ENCODE measurements at regions of chr9 and their contacts with region 1.

Region 1: DNA sequence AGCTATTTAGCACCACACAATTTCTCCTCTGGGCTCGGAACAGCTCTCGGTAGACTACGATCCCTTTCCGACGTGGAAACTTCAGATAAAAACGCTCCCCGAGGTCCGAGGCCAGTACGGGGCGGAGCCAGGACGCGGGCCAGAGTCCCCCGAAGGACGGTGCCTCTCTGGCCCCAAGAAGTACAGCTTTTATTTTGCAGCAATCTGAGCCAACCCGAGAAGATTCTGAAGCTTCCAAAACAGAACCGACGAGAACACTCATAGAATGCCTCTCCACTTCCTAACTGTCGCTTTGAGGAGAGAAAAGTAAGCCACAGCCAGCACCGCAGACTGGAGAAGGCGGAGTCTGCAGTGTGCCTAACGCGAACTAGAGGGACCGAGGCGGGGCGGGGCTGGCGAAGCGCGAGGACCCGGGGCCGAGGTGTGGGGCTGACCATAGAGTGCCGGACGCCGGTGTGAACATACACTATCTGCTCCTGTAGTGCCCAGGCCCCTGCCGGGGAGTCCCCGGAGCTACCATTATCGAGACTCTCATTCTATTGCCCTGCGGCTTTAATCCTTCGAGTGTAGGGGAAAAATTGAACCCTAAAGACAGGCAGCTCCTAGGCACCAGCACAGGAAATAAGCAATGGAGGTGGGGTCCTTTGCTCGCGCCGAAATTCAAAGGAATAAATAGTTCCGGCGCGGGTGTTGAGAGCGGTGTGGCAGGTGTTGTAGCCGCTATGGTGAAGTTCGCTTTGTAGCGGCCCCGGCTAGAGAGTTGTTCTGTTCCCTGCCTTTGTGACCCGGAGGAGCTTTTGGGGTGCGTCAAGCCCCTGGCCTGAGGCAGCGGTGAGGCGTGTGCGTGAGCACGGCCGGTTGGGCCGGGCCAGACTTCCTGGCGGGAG is at the start of gene SMC2:
- DNase-seq: peak; percentile 90 to 96 (median 92)
- ATAC-seq: peak; percentile 93
- H3K4me3 ChIP-seq: peak within 1 kb of the TSS; percentile 71
- H3K4me3 Mint-ChIP-seq: peak within 1 kb of the TSS; percentile 99
- H3K27ac ChIP-seq: peak within 1 kb of the TSS; percentile 80 to 92
- H3K27ac Mint-ChIP-seq: peak within 1 kb of the TSS; percentile 99
- H3K4me1 ChIP-seq: peaks cover 15% of the 10 kb centered on the region
- H3K4me1 Mint-ChIP-seq: peaks cover 60% of the 10 kb centered on the region
- H3K27me3 ChIP-seq: no peaks in the 10 kb centered on the region
- H3K27me3 Mint-ChIP-seq: no peaks in the 10 kb centered on the region
- CTCF ChIP-seq: no peak
- total RNA-seq, gene SMC2: 2.6 to 2.9 TPM

Region 2: DNA sequence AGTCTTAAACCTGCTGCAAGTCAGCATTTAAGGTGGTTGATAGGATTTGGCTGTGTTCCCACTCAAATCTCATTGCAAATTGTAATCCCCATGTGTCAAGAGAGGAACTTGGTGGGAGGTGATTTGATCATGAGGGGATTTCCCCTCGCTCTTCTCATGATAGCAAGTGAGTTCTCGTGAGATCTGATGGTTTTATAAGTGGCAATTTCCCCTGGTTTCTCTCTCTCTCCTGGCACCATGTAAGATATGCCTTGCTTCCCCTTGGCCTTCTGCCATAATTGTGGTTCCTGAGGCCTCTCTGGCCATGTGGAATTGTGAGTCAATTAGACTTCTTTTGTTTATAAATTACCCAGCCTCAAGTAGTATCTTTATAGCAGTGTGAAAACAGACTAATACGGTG is 84.1 kb before region 1 on chr9:
- CTCF ChIA-PET with region 1: no interaction called
- POLR2A ChIA-PET with region 1: no interaction called
- intact Hi-C with region 1: loop called in 1 of 2 experiments (anchors 5 kb)
- DNase-seq: no peak
- ATAC-seq: no peak
- H3K4me3 ChIP-seq: no peak overlapping the region
- H3K4me3 Mint-ChIP-seq: no peak overlapping the region
- H3K27ac ChIP-seq: no peak overlapping the region
- H3K27ac Mint-ChIP-seq: no peak overlapping the region
- H3K4me1 ChIP-seq: no peaks in the 10 kb centered on the region
- H3K4me1 Mint-ChIP-seq: no peaks in the 10 kb centered on the region
- H3K27me3 ChIP-seq: no peaks in the 10 kb centered on the region
- H3K27me3 Mint-ChIP-seq: peaks cover 12% of the 10 kb centered on the region
- CTCF ChIP-seq: no peak

Region 3: DNA sequence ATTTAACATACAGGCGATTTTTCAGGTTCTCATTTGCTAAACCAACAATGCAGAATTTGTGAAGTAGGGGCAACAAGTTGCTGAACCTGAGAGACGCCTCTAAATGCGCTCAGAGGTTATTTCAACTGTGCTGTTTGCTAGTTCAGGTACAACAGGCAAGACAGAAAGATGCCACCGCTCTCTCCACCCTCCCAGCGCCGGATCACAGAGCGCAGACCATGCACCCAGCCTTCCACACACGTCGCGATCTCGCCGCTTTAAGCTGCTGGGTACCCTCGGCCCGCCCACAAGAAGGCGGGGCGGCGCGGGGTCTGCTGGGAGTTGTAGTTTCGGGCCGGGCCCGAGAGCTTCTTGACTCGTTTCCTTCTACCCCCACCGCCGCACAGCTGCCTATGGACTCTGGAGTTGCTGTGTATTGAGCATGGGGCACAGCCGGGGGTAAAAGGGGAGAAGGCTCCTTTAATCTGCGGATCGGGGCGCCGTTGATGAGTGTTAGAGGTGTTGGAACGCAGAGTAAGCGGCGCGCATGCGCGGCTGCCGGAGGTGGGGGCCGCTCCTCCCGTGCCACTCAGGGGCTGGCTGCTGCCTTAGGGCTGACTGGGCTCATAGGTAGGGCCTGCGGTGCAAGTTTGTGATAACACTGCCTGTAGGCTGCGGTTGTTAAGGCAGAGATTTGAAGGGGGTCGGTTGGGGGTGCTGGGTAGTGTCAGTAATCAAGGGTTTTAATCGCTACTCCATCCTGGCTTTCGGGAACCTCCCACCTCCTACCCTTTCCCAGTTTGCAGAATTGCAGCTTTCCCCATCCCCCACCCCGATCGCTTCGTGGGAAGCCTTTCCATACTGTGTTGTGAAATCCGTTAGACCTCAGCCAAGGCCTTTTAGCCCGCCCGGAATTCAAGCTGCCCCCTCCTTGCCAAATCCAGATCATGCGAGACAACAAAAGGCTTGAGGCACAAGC is 874.4 kb after region 1 on chr9:
- CTCF ChIA-PET with region 1: no interaction called
- POLR2A ChIA-PET with region 1: interaction called, 3 read pairs
- intact Hi-C with region 1: loop called in 1 of 2 experiments (anchors 5 kb)
- DNase-seq: peak; percentile 80 to 92 (median 86)
- ATAC-seq: peak; percentile 97
- H3K4me3 ChIP-seq: peak overlapping the region; percentile 75
- H3K4me3 Mint-ChIP-seq: peak overlapping the region; percentile 95
- H3K27ac ChIP-seq: no peak overlapping the region
- H3K27ac Mint-ChIP-seq: peak overlapping the region; percentile 77
- H3K4me1 ChIP-seq: peaks cover 14% of the 10 kb centered on the region
- H3K4me1 Mint-ChIP-seq: peaks cover 27% of the 10 kb centered on the region
- H3K27me3 ChIP-seq: no peaks in the 10 kb centered on the region
- H3K27me3 Mint-ChIP-seq: peaks cover 8% of the 10 kb centered on the region
- CTCF ChIP-seq: no peak

Region 4: DNA sequence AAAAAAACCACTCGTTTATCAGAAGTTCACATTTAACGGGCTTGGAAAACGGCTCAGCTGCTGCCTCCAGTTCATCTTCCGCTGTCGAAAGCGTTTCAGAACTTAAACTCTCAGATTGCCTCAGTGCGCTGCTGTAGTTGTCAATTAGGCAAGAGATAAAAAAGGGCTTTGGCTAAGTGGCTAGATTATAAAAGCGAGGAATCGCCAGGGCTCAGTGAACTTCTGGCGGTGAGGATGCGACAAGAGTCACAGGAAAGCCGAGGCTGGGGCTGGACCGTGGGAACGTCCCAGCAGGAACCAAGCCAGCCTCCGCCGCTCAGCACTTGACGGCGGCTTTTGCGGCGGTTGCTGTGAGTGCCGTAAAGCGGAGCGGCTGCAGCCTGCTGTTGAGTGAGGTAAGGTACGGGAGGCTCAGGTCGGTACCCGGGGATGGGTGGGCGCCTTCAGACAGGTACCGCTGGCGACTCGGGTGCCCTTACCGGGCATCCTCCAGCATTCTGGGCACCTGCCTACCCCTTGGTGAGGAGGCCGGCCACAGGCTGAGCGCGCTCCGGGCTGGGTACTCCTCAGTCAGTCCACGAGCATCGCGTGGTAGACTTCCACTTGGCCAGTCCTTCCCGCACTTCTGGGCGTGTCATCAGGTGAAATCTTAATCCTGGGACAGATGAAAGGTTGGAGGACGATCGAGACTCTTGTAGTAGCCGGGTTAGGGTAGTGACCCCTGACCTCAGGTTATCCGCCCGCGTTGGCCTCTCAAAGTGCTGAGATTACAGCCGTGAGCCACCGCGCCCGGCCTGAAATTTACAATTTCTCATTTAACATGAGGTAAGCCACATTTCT is 1464.1 kb after region 1 on chr9 and contains the start of gene FKTN:
- CTCF ChIA-PET with region 1: no interaction called
- POLR2A ChIA-PET with region 1: no interaction called
- intact Hi-C with region 1: loop called (anchors 10 kb)
- DNase-seq: peak; percentile 56 to 87 (median 72)
- ATAC-seq: peak; percentile 96
- H3K4me3 ChIP-seq: peak within 1 kb of the TSS; percentile 94
- H3K4me3 Mint-ChIP-seq: peak within 1 kb of the TSS; percentile 93
- H3K27ac ChIP-seq: peak within 1 kb of the TSS; percentile 30 to 47
- H3K27ac Mint-ChIP-seq: peak within 1 kb of the TSS; percentile 83
- H3K4me1 ChIP-seq: peaks cover 12% of the 10 kb centered on the region
- H3K4me1 Mint-ChIP-seq: peaks cover 19% of the 10 kb centered on the region
- H3K27me3 ChIP-seq: no peaks in the 10 kb centered on the region
- H3K27me3 Mint-ChIP-seq: no peaks in the 10 kb centered on the region
- CTCF ChIP-seq: no peak
- total RNA-seq, gene FKTN: 5.7 to 5.8 TPM

Region 5: GRCh38 chr9:105694190-105694847 is 1600.4 kb after region 1 on chr9 and contains the start of gene TMEM38B:
- CTCF ChIA-PET with region 1: no interaction called
- POLR2A ChIA-PET with region 1: interaction called, 5 read pairs
- intact Hi-C with region 1: loop called in 1 of 2 experiments (anchors 10 kb)
- DNase-seq: peak; percentile 50 to 93 (median 74)
- ATAC-seq: peak; percentile 86
- H3K4me3 ChIP-seq: peak within 1 kb of the TSS; percentile 86
- H3K4me3 Mint-ChIP-seq: peak within 1 kb of the TSS; percentile 93
- H3K27ac ChIP-seq: peak within 1 kb of the TSS in 1 of 2 donors; percentile 22
- H3K27ac Mint-ChIP-seq: peak within 1 kb of the TSS; percentile 73
- H3K4me1 ChIP-seq: peaks cover 7% of the 10 kb centered on the region
- H3K4me1 Mint-ChIP-seq: peaks cover 40% of the 10 kb centered on the region
- H3K27me3 ChIP-seq: peaks cover 9 to 24% of the 10 kb centered on the region in 2 experiments
- H3K27me3 Mint-ChIP-seq: peaks cover 30% of the 10 kb centered on the region
- CTCF ChIP-seq: no peak
- total RNA-seq, gene TMEM38B: 12.9 to 13.9 TPM

Measured in CD4-positive, alpha-beta T cell (primary cell).